ENCODE measurements at regions of chr20 and their contacts with region 1.

Region 1: DNA sequence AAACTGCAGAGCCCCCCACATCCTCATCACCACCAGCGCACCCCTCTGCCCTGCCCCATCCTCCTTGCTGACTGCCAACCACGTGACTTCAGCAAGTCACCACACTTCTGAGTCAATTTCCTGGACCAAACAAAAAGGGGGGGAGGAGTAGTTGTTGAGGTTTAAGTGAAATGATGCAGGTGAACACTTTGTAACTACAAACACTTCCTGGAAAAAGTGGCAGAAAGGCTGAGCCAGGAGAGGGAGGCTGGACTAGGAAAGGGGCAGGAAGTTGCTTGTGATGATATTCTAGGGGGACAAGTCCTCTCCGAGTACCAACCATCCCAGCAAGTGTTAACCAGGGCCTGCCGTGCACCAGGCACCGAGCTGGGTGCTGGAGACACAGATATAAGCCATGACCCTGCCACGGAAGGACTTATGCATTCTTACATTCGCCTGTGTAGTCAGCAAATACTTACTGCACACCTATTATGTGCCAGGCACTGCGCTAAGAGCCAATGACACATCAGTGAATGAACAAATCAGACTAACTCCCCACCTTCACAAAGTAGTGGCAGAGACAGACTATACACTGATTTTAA is 67.3 kb downstream of the PREX1 start:
- DNase-seq: peak; percentile 93
- H3K4me3 Mint-ChIP-seq: peak overlapping the region; percentile 75
- H3K27ac Mint-ChIP-seq: peak overlapping the region; percentile 97
- H3K4me1 Mint-ChIP-seq: peaks cover 76% of the 10 kb centered on the region
- H3K27me3 Mint-ChIP-seq: no peaks in the 10 kb centered on the region

Region 2: GRCh38 chr20:48718857-48719578 is 41.5 kb before region 1 on chr20:
- intact Hi-C with region 1: loop called (anchors 2 kb)
- DNase-seq: peak; percentile 80
- H3K4me3 Mint-ChIP-seq: peak overlapping the region; percentile 76
- H3K27ac Mint-ChIP-seq: peak overlapping the region; percentile 81
- H3K4me1 Mint-ChIP-seq: peaks cover 80% of the 10 kb centered on the region
- H3K27me3 Mint-ChIP-seq: no peaks in the 10 kb centered on the region

Region 3: GRCh38 chr20:48776306-48776705 is 15.8 kb after region 1 on chr20:
- intact Hi-C with region 1: no loop called
- DNase-seq: no peak
- H3K4me3 Mint-ChIP-seq: no peak overlapping the region
- H3K27ac Mint-ChIP-seq: no peak overlapping the region
- H3K4me1 Mint-ChIP-seq: peaks cover 54% of the 10 kb centered on the region
- H3K27me3 Mint-ChIP-seq: no peaks in the 10 kb centered on the region

Region 4: GRCh38 chr20:49166534-49167449 is 406.3 kb after region 1 on chr20:
- intact Hi-C with region 1: loop called (anchors 10 kb)
- DNase-seq: peak; percentile 69
- H3K4me3 Mint-ChIP-seq: peak overlapping the region; percentile 72
- H3K27ac Mint-ChIP-seq: peak overlapping the region; percentile 90
- H3K4me1 Mint-ChIP-seq: peaks cover 49% of the 10 kb centered on the region
- H3K27me3 Mint-ChIP-seq: no peaks in the 10 kb centered on the region